ENCODE measurements at regions of chr5 and their contacts with region 1.

Region 1: GRCh38 chr5:41869739-41870626 is at the start of gene OXCT1:
- DNase-seq: peak; percentile 84 to 97
- ATAC-seq: peak; percentile 91 to 95 (median 93)
- H3K4me3 ChIP-seq: peak within 1 kb of the TSS; percentile 94
- H3K4me3 Mint-ChIP-seq: peak within 1 kb of the TSS; percentile 91
- H3K27ac ChIP-seq: peak within 1 kb of the TSS; percentile 80
- H3K27ac Mint-ChIP-seq: peak within 1 kb of the TSS; percentile 84 to 89
- H3K4me1 ChIP-seq: peaks cover 22% of the 10 kb centered on the region
- H3K4me1 Mint-ChIP-seq: peaks cover 22 to 34% of the 10 kb centered on the region in 2 donors
- H3K27me3 ChIP-seq: no peaks in the 10 kb centered on the region
- H3K27me3 Mint-ChIP-seq: peaks cover 3 to 4% of the 10 kb centered on the region in 2 donors
- CTCF ChIP-seq: no peak
- total RNA-seq, gene OXCT1: 17.1 to 19.9 (median 18.0) TPM

Region 2: DNA sequence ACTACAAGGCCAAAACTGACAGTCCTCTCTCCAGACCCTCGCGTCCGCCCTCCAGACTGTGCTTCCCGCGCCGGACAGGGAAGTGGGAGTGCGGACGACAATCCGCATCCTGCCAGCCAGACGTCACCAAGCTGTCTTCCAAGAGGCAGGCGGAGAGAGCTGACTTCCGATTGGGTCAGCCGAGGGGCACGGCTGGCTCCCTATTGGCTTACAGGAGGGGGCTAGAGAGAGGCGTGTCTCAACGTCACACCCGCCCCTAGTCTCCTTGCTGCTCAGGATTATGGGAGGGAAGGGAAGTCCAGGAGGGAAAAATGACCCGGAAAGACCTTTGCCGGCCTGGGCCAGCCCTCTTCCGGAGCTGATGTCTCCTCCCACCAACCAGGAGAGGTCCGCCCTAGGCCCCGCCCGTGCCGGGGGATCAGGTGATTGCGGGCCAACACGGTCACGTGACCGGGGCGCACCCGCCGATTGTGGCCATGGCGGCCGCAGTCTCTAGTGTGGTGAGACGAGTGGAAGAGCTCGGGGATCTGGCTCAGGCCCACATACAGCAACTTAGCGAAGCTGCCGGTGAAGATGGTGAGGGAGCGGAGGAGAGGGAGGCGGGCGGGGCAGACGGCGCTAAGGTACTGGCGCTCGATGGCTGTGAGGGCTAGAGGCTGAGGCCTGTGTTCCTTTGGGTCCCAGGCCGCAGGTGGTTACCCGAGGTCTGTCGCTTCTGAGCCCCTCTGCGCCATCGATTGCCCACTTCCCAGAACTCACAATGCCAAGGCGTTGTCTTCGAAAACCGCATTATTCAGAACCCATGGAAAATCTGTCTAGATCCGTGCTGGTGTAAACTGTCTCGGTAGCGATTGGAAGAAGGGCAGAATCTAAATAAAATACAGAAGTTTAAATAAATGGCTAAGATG is 34.2 kb after region 1 on chr5 and contains the start of gene RIMOC1:
- intact Hi-C with region 1: loop called (anchors 1 kb)
- DNase-seq: peak; percentile 96 to 98
- ATAC-seq: peak; percentile 87 to 95 (median 87)
- H3K4me3 ChIP-seq: peak within 1 kb of the TSS; percentile 59
- H3K4me3 Mint-ChIP-seq: peak within 1 kb of the TSS; percentile 98
- H3K27ac ChIP-seq: peak within 1 kb of the TSS; percentile 91
- H3K27ac Mint-ChIP-seq: peak within 1 kb of the TSS; percentile 99
- H3K4me1 ChIP-seq: peaks cover 10% of the 10 kb centered on the region
- H3K4me1 Mint-ChIP-seq: peaks cover 22 to 31% of the 10 kb centered on the region in 2 donors
- H3K27me3 ChIP-seq: no peaks in the 10 kb centered on the region
- H3K27me3 Mint-ChIP-seq: peaks cover 6 to 11% of the 10 kb centered on the region in 2 donors
- CTCF ChIP-seq: no peak
- total RNA-seq, gene RIMOC1: 9.9 to 18.1 (median 14.2) TPM

Measured in natural killer cell (primary cell).